ENCODE measurements at regions of chr11 and their contacts with region 1.

Region 1: GRCh38 chr11:10792398-10792975 is 16.2 kb downstream of the EIF4G2 start:
- DNase-seq: peak; percentile 63 to 80
- ATAC-seq: peak; percentile 84 to 95
- H3K4me3 ChIP-seq: peak overlapping the region in 1 of 4 donors; percentile 17
- H3K27ac ChIP-seq: no peak overlapping the region
- H3K4me1 ChIP-seq: peaks cover 0 to 5% of the 10 kb centered on the region in 2 donors
- H3K27me3 ChIP-seq: no peaks in the 10 kb centered on the region
- CTCF ChIP-seq: peak; percentile 88 to 96 (median 93)
- POLR2A ChIP-seq: no peak

Region 2: DNA sequence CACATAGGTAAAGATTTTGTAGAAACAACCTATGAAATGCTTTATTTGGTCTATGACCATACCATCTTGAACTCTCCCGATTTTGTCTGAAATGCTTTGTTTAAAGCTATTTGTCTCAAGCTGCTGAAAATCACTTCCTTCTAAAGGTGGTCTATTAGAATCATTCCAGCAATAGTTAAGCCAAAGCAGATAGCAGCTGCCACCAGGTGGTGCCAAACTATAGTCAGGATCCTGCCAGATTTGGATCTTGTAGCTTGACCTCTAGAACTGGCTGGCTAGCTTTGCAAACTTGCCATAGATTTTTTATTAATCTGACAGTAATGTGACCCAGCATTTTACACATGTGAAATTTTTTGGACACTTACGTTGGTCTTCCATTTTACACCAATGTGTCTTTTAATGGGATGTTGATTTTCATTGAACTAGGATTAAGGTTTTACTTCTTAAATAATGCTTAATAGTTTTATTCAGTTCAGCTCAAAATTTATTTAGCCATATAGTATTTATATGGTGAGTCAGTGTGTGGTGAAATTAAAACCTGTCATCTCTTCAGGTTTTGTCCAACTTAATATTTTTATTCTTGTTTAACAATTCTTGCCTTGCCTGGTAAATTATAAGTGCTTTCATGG is 21.7 kb before region 1 on chr11:
- in situ Hi-C with region 1: no loop called
- intact Hi-C with region 1: loop called (anchors 2 kb)
- DNase-seq: peak; percentile 40 to 71
- ATAC-seq: peak; percentile 74 to 90
- H3K4me3 ChIP-seq: no peak overlapping the region
- H3K27ac ChIP-seq: peak overlapping the region in 2 of 4 donors; percentile 66 to 70
- H3K4me1 ChIP-seq: peaks cover 25 to 27% of the 10 kb centered on the region in 2 donors
- H3K27me3 ChIP-seq: no peaks in the 10 kb centered on the region
- CTCF ChIP-seq: peak; percentile 46 to 74 (median 58)
- POLR2A ChIP-seq: no peak

Region 3: GRCh38 chr11:10906513-10906912 is 114.0 kb after region 1 on chr11:
- in situ Hi-C with region 1: no loop called
- intact Hi-C with region 1: loop called (anchors 1 kb)
- DNase-seq: no peak
- ATAC-seq: peak; percentile 51 to 75
- H3K4me3 ChIP-seq: no peak overlapping the region
- H3K27ac ChIP-seq: peak overlapping the region in 2 of 4 donors; percentile 9 to 51
- H3K4me1 ChIP-seq: peaks cover 12 to 17% of the 10 kb centered on the region in 2 donors
- H3K27me3 ChIP-seq: no peaks in the 10 kb centered on the region
- CTCF ChIP-seq: peak in 3 of 5 experiments; percentile 4 to 45 (median 28)
- POLR2A ChIP-seq: no peak

Region 4: GRCh38 chr11:11010624-11011127 is 218.2 kb after region 1 on chr11:
- in situ Hi-C with region 1: no loop called
- intact Hi-C with region 1: loop called (anchors 1 kb)
- DNase-seq: peak in 1 of 2 donors; percentile 25
- ATAC-seq: peak; percentile 61 to 62
- H3K4me3 ChIP-seq: peak overlapping the region in 1 of 4 donors; percentile 7
- H3K27ac ChIP-seq: no peak overlapping the region
- H3K4me1 ChIP-seq: no peaks in the 10 kb centered on the region
- H3K27me3 ChIP-seq: no peaks in the 10 kb centered on the region
- CTCF ChIP-seq: peak in 2 of 5 experiments; percentile 41 to 50
- POLR2A ChIP-seq: no peak

Region 5: DNA sequence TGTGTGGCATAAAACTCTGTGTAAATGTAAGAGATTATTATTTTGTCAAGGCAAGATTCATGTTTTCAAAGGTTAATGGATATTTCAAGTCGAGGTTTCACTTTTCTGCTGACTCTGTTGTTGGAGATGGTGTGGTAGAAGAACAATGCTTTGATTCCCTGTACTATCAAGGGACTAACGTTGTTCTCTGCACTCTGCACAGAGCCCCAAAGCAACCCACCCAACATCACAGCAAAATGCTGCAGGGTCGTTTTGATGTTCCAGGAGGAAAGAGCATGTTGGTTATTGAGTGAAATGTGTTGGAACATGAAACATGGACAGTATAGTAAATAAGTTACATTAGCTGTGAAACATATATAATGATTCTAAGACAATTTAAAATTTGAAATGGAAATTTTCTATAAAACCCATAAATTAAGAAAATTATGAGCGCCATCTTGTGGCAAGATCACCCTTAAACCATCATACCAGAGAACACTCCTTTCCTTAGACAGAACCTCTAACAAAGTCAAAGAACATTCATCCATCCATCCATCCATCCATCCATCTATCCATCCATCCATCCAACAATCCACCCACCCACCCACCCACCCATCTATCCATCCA is 229.7 kb after region 1 on chr11:
- in situ Hi-C with region 1: loop called (anchors 5 to 10 kb)
- intact Hi-C with region 1: loop called (anchors 1 kb)
- DNase-seq: no peak
- ATAC-seq: no peak
- H3K4me3 ChIP-seq: no peak overlapping the region
- H3K27ac ChIP-seq: no peak overlapping the region
- H3K4me1 ChIP-seq: no peaks in the 10 kb centered on the region
- H3K27me3 ChIP-seq: no peaks in the 10 kb centered on the region
- CTCF ChIP-seq: peak; percentile 16 to 59 (median 38)
- POLR2A ChIP-seq: no peak

Region 6: DNA sequence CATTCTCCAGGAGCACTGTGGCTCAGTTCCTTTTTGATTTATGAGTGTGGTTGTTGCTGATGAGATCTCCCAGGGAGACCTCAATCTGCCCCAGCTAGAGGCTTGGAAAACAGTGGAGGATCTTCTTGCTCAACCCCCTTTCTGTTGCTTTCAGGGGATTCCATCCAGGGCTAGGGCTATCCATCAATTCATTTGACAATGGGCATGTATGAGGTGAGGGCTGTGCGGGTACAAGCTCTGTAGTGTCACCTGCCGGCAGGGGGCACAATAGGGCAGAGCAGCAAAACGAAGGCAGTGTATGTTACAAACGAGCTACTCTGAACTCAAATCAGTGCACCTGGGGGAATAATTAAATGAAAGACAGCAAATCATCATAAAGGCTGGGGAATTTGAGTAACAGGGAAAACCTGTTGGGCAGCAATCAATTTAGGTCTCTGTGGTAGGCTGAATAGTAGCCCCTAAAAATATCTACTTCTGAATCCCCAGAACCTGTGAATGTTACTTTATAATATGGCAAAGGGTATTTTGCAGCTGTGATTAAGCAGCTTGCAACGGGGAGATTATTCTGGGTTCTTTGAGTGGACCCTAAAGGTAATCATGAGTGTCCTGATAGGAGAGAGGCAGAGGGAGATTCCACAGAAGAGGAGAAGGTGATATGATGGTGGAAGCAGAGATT is 235.7 kb after region 1 on chr11:
- in situ Hi-C with region 1: loop called (anchors 5 to 10 kb)
- intact Hi-C with region 1: no loop called
- DNase-seq: peak; percentile 38 to 53
- ATAC-seq: peak; percentile 82 to 94
- H3K4me3 ChIP-seq: no peak overlapping the region
- H3K27ac ChIP-seq: no peak overlapping the region
- H3K4me1 ChIP-seq: no peaks in the 10 kb centered on the region
- H3K27me3 ChIP-seq: no peaks in the 10 kb centered on the region
- CTCF ChIP-seq: peak; percentile 65 to 85 (median 72)
- POLR2A ChIP-seq: no peak

Measured in gastrocnemius medialis (tissue), 4 donors.